ENCODE measurements at regions of chr5 and their contacts with region 1.

Region 1: DNA sequence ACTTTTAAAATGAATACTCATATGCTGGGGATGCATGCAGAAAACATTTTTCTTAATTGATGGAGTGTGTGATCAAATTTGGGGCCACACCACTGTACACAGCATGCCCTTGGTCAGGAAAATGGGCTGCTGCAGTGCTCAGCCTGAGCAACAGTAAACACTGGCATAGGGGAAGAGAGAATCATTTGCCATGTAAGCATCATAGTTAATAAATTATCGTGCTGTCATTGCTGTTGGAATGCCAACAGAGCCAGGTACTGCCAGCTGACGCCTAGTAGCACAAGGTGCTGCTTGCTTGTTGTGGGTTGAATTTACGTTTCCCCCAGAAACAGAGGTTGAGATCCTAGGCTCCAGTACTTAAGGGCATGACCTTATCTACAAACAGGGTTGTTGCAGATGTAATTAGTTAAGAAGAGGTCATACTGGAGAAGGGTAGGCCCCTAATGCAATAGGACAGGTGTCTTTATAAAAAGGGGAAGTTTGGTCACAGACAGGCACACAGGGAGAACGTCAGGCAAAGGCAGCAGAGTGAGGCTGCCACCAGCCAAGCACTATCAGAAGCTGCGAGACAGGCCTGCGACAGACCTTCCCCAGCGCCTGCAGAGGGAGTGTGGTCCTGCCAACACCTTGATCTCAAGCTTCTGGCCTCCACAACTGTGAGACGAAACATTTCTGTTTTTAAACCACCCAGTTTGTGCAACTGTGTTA is 25.3 kb downstream of the DAP start:
- DNase-seq: peak in 2 of 4 experiments; percentile 35 to 70
- ATAC-seq: peak; percentile 68
- H3K4me3 ChIP-seq: no peak overlapping the region
- H3K27ac ChIP-seq: peak overlapping the region; percentile 25; the same call in 2 of the 3 replicates
- H3K4me1 ChIP-seq: peaks cover 23 to 54% of the 10 kb centered on the region in 2 experiments
- H3K27me3 ChIP-seq: no peaks in the 10 kb centered on the region
- CTCF ChIP-seq: peak; percentile 17 to 46 (median 32); a peak in 3 of 6 replicates
- EP300 ChIP-seq: peak; percentile 16; the same call in 1 of the 2 replicates
- POLR2A ChIP-seq: no peak
- RAD21 ChIP-seq: peak; percentile 25 to 27; a peak in 1 of 4 replicates

Region 2: DNA sequence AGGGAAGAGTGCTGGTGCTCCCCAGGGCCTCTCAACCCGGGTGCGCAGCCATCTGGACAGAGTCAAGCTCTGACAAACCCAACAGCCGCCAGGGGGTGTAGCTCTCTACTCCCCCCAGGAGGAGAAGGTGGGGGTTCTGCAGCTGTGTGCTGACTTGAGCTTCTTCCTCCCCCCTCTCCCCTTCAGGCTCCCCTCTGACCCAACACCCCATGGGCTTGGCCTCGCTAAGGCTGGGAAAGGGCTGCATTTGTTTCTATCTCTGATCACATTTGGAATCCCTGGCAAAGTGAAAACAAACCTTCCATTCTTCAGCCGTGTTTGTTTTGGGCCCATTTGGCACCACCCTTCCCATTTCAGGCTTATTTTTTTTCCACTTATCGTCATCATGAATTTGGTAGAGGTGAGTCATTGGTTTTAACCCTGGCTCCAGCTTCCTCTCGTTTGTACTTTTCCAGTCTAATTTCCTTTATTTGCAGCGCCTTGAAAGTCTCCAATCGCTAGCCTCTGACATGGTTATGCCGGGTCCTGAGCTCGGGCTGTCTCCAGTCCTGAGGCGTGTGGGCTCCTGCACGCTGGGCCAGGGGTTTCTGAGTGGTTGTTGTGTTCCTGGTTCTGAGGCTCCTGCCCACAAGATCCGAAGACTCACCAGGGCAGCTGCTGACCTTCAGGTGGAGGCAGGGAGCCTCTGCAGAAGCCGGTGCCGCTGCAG is 10.8 kb before region 1 on chr5:
- CTCF ChIA-PET with region 1: no interaction called
- POLR2A ChIA-PET with region 1: interaction called, 21 read pairs
- in situ Hi-C with region 1: no loop called
- intact Hi-C with region 1: no loop called
- DNase-seq: peak; percentile 86 to 92 (median 88)
- ATAC-seq: peak; percentile 95
- H3K4me3 ChIP-seq: no peak overlapping the region
- H3K27ac ChIP-seq: peak overlapping the region; percentile 82
- H3K4me1 ChIP-seq: peaks cover 24 to 53% of the 10 kb centered on the region in 2 experiments
- H3K27me3 ChIP-seq: no peaks in the 10 kb centered on the region
- CTCF ChIP-seq: peak; percentile 87 to 96 (median 89)
- EP300 ChIP-seq: no peak
- POLR2A ChIP-seq: peak; percentile 26; the same call in 1 of the 2 replicates
- RAD21 ChIP-seq: peak; percentile 52 to 84; a peak in 3 of 4 replicates

Measured in K562 (cell line).